ENCODE measurements at regions of chr7 and their contacts with region 1.

Region 1: GRCh38 chr7:112206238-112207044 is at the starts of genes DOCK4 and ZNF277:
- DNase-seq: peak; percentile 98 to 100 (median 99)
- ATAC-seq: peak; percentile 87
- H3K4me3 ChIP-seq: peak within 1 kb of the TSS; percentile 87
- H3K4me3 Mint-ChIP-seq: peak within 1 kb of the TSS; percentile 99
- H3K27ac ChIP-seq: peak within 1 kb of the TSS in 1 of 2 donors; percentile 48
- H3K27ac Mint-ChIP-seq: peak within 1 kb of the TSS; percentile 91
- H3K4me1 ChIP-seq: peaks cover 29% of the 10 kb centered on the region
- H3K4me1 Mint-ChIP-seq: peaks cover 55% of the 10 kb centered on the region
- H3K27me3 ChIP-seq: peaks cover 18 to 30% of the 10 kb centered on the region in 2 experiments
- H3K27me3 Mint-ChIP-seq: peaks cover 30% of the 10 kb centered on the region
- CTCF ChIP-seq: no peak
- total RNA-seq, gene DOCK4: 0.31 to 0.38 TPM
- total RNA-seq, gene ZNF277: 21.6 to 22.5 TPM

Region 2: GRCh38 chr7:112172870-112173567 is 33.4 kb before region 1 on chr7:
- CTCF ChIA-PET with region 1: no interaction called
- POLR2A ChIA-PET with region 1: no interaction called
- intact Hi-C with region 1: no loop called
- DNase-seq: no peak
- ATAC-seq: no peak
- H3K4me3 ChIP-seq: no peak overlapping the region
- H3K4me3 Mint-ChIP-seq: no peak overlapping the region
- H3K27ac ChIP-seq: no peak overlapping the region
- H3K27ac Mint-ChIP-seq: no peak overlapping the region
- H3K4me1 ChIP-seq: no peaks in the 10 kb centered on the region
- H3K4me1 Mint-ChIP-seq: no peaks in the 10 kb centered on the region
- H3K27me3 ChIP-seq: peaks cover 2 to 8% of the 10 kb centered on the region in 2 experiments
- H3K27me3 Mint-ChIP-seq: peaks cover 31% of the 10 kb centered on the region
- CTCF ChIP-seq: no peak

Region 3: DNA sequence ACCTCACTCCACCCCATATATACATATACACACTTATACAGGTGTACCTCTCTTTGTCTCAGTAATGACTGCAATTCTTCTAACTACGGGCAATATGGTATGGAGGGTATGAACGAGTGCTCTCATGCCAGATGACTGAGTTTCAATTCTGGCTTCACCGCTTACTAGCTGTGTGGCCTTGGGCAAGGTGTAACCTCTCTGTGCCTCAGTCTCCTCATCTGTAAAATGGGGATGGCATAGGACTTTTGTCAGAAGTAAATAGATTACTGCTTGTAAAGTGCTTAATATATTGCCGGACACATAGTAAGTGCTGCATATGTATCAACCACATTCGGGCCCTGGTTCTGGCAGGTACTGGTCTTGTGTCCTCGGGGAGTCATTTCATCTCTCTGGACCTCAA is 183.7 kb after region 1 on chr7:
- CTCF ChIA-PET with region 1: no interaction called
- POLR2A ChIA-PET with region 1: no interaction called
- intact Hi-C with region 1: loop called (anchors 5 to 10 kb)
- DNase-seq: no peak
- ATAC-seq: no peak
- H3K4me3 ChIP-seq: no peak overlapping the region
- H3K4me3 Mint-ChIP-seq: peak overlapping the region; percentile 73
- H3K27ac ChIP-seq: no peak overlapping the region
- H3K27ac Mint-ChIP-seq: peak overlapping the region; percentile 34
- H3K4me1 ChIP-seq: peaks cover 9% of the 10 kb centered on the region
- H3K4me1 Mint-ChIP-seq: peaks cover 22% of the 10 kb centered on the region
- H3K27me3 ChIP-seq: no peaks in the 10 kb centered on the region
- H3K27me3 Mint-ChIP-seq: no peaks in the 10 kb centered on the region
- CTCF ChIP-seq: no peak

Region 4: DNA sequence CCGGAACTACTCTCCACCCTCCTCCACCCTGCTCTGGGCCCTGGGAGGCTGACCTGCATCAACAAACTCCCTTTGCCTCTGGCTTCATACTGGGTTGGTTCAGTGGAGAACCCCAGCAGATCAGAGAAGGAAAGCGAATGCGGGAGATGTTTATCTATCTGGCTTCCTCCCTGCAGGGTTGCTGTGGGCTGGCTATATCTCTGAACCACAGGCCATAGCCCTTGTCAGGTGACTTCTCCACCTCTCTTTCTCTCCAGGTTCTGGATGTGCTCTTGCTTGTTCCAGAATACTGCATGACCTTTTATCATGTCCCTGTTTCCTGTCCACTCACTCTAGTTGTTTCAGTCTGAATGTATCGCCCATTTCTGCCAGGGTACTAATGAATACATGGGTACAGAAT is 192.1 kb after region 1 on chr7:
- CTCF ChIA-PET with region 1: no interaction called
- POLR2A ChIA-PET with region 1: no interaction called
- intact Hi-C with region 1: loop called (anchors 5 to 10 kb)
- DNase-seq: peak in 4 of 14 experiments; percentile 21 to 57 (median 54)
- ATAC-seq: peak; percentile 80
- H3K4me3 ChIP-seq: no peak overlapping the region
- H3K4me3 Mint-ChIP-seq: peak overlapping the region; percentile 46
- H3K27ac ChIP-seq: peak overlapping the region in 1 of 2 donors; percentile 10
- H3K27ac Mint-ChIP-seq: peak overlapping the region; percentile 12
- H3K4me1 ChIP-seq: peaks cover 12% of the 10 kb centered on the region
- H3K4me1 Mint-ChIP-seq: peaks cover 36% of the 10 kb centered on the region
- H3K27me3 ChIP-seq: no peaks in the 10 kb centered on the region
- H3K27me3 Mint-ChIP-seq: no peaks in the 10 kb centered on the region
- CTCF ChIP-seq: no peak

Region 5: GRCh38 chr7:112789817-112790585 is 583.6 kb after region 1 on chr7 and contains the start of gene TMEM168:
- CTCF ChIA-PET with region 1: no interaction called
- POLR2A ChIA-PET with region 1: no interaction called
- intact Hi-C with region 1: loop called in 1 of 2 experiments (anchors 2 kb)
- DNase-seq: peak; percentile 80 to 92 (median 84)
- ATAC-seq: peak; percentile 91
- H3K4me3 ChIP-seq: peak within 1 kb of the TSS; percentile 95
- H3K4me3 Mint-ChIP-seq: peak within 1 kb of the TSS; percentile 92
- H3K27ac ChIP-seq: peak within 1 kb of the TSS; percentile 65 to 79
- H3K27ac Mint-ChIP-seq: peak within 1 kb of the TSS; percentile 77
- H3K4me1 ChIP-seq: peaks cover 22% of the 10 kb centered on the region
- H3K4me1 Mint-ChIP-seq: peaks cover 46% of the 10 kb centered on the region
- H3K27me3 ChIP-seq: no peaks in the 10 kb centered on the region
- H3K27me3 Mint-ChIP-seq: no peaks in the 10 kb centered on the region
- CTCF ChIP-seq: no peak
- total RNA-seq, gene TMEM168: 11.5 to 11.9 TPM

Region 6: DNA sequence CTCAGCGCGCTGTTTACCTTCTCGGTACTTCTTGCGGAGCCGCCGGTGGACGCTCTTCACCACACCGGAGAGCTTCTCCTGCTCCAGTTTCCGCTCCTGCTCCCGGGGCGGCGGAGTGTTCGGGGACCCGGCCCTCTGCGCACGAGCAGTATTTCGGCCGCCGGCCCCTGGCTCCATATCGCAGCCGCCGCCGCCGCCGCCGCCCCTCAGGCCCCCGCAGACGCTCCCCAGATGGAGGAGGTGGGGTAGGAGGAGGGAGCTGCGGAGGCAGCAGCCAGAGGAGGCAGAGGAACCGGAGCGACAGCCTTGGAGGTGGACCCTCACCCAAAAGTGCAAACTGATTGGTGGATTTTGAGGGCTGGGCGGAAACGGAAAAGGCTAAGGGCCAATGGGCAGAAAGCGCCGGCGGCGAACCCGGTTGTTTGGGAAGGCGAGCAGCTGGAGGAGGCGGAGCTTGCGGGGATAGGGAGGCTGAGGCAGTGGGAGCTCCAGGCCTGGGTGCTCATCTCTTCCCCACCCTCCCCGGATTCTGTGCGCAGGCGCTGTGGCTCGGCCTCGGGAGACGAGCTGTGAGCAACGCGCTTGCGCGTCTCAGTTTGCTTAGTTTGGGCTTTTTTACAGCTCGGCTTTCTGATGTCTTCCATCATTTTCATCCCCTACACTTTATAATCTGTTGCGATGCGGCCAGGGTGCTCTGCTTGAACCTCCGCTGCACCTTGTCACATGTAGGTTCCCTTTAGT is 733.3 kb after region 1 on chr7:
- CTCF ChIA-PET with region 1: interaction called, 3 read pairs
- POLR2A ChIA-PET with region 1: no interaction called
- intact Hi-C with region 1: loop called in 1 of 2 experiments (anchors 10 kb)
- DNase-seq: peak; percentile 98 to 100 (median 99)
- ATAC-seq: peak; percentile 95
- H3K4me3 ChIP-seq: peak overlapping the region; percentile 83
- H3K4me3 Mint-ChIP-seq: peak overlapping the region; percentile 98
- H3K27ac ChIP-seq: peak overlapping the region; percentile 53 to 66
- H3K27ac Mint-ChIP-seq: peak overlapping the region; percentile 88
- H3K4me1 ChIP-seq: peaks cover 18% of the 10 kb centered on the region
- H3K4me1 Mint-ChIP-seq: peaks cover 53% of the 10 kb centered on the region
- H3K27me3 ChIP-seq: no peaks in the 10 kb centered on the region
- H3K27me3 Mint-ChIP-seq: no peaks in the 10 kb centered on the region
- CTCF ChIP-seq: no peak

Region 7: GRCh38 chr7:113118074-113118959 is 911.9 kb after region 1 on chr7 and contains the start of gene SMIM30:
- CTCF ChIA-PET with region 1: no interaction called
- POLR2A ChIA-PET with region 1: interaction called, 3 read pairs
- intact Hi-C with region 1: loop called in 1 of 2 experiments (anchors 5 kb)
- DNase-seq: peak; percentile 79 to 94 (median 86)
- ATAC-seq: peak; percentile 100
- H3K4me3 ChIP-seq: peak within 1 kb of the TSS; percentile 72
- H3K4me3 Mint-ChIP-seq: peak within 1 kb of the TSS; percentile 94
- H3K27ac ChIP-seq: peak within 1 kb of the TSS; percentile 49 to 86
- H3K27ac Mint-ChIP-seq: peak within 1 kb of the TSS; percentile 88
- H3K4me1 ChIP-seq: peaks cover 4% of the 10 kb centered on the region
- H3K4me1 Mint-ChIP-seq: peaks cover 21% of the 10 kb centered on the region
- H3K27me3 ChIP-seq: no peaks in the 10 kb centered on the region
- H3K27me3 Mint-ChIP-seq: no peaks in the 10 kb centered on the region
- CTCF ChIP-seq: no peak
- total RNA-seq, gene SMIM30: 2.7 to 3.5 TPM